Caco-2 (cell line): ENCODE measurements at regions of chr3 and their contacts with region 1.

Region 1: GRCh38 chr3:37453393-37454389 is 279.3 kb upstream of the LRRFIP2 start:
- DNase-seq: peak; percentile 59 to 67
- H3K4me3 ChIP-seq: peak overlapping the region; percentile 52
- H3K4me3 Mint-ChIP-seq: peak overlapping the region; percentile 72
- H3K27ac Mint-ChIP-seq: no peak overlapping the region
- H3K4me1 ChIP-seq: 0 out of 2 replicates have a peak, but pooled peaks cover 12% of the 10 kb centered on the region
- H3K4me1 Mint-ChIP-seq: peaks cover 12% of the 10 kb centered on the region
- H3K27me3 ChIP-seq: no peaks in the 10 kb centered on the region
- H3K27me3 Mint-ChIP-seq: peaks cover 5% of the 10 kb centered on the region
- CTCF ChIP-seq: peak in 1 of 2 experiments; percentile 69

Region 2: GRCh38 chr3:36373084-36373483 is 1080.6 kb before region 1 on chr3:
- CTCF ChIA-PET with region 1: no interaction called
- POLR2A ChIA-PET with region 1: no interaction called
- intact Hi-C with region 1: no loop called
- DNase-seq: no peak
- H3K4me3 ChIP-seq: no peak overlapping the region
- H3K4me3 Mint-ChIP-seq: no peak overlapping the region
- H3K27ac Mint-ChIP-seq: no peak overlapping the region
- H3K4me1 ChIP-seq: no peaks in the 10 kb centered on the region
- H3K4me1 Mint-ChIP-seq: no peaks in the 10 kb centered on the region
- H3K27me3 ChIP-seq: no peaks in the 10 kb centered on the region
- H3K27me3 Mint-ChIP-seq: peaks cover 19% of the 10 kb centered on the region
- CTCF ChIP-seq: no peak

Region 3: DNA sequence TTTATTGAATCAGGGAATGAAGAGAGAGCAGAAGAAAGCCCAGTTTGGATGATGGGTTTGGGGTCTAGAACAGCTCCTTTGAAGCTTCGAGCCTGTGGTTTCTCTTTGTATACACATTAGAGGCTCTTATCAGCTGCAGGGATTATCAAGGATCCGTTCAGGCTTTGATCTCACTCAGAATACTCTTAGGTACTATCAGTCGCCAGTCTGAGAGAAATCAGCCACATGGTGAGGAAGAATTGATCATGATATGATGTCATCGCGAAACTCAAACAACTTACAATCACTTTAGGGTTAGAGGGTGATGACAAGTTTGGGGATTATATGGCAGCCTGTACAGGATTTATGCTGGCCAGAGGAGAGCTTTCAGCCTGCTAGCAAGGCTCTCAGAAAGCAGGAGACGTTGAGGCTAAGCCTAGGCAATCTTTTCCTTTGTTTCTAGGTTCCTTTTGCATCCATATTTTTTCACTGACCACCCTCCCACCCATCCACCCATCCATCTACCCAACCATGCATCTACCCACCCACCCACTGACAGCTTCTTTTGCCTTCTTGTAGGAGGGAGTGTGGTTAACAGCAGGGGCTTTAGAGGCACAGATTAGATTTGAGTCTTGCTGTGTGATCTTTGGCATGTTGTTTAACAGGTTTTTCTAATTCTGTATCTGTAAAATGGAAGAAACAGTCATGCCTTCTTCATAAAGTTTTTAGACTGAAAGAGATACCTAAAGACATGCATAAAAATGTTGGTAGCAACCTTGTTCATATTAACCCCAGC is 51.1 kb after region 1 on chr3:
- CTCF ChIA-PET with region 1: interaction called, 3 read pairs
- POLR2A ChIA-PET with region 1: interaction called, 4 read pairs
- intact Hi-C with region 1: loop called (anchors 1 kb)
- DNase-seq: peak; percentile 77 to 80
- H3K4me3 ChIP-seq: no peak overlapping the region
- H3K4me3 Mint-ChIP-seq: peak overlapping the region; percentile 39
- H3K27ac Mint-ChIP-seq: peak overlapping the region; percentile 69
- H3K4me1 ChIP-seq: peaks cover 53% of the 10 kb centered on the region
- H3K4me1 Mint-ChIP-seq: peaks cover 56% of the 10 kb centered on the region
- H3K27me3 ChIP-seq: no peaks in the 10 kb centered on the region
- H3K27me3 Mint-ChIP-seq: no peaks in the 10 kb centered on the region
- CTCF ChIP-seq: no peak